Colonic mucosa (tissue), 4 donors: ENCODE measurements at regions of chr12 and their contacts with region 1.

Region 1: DNA sequence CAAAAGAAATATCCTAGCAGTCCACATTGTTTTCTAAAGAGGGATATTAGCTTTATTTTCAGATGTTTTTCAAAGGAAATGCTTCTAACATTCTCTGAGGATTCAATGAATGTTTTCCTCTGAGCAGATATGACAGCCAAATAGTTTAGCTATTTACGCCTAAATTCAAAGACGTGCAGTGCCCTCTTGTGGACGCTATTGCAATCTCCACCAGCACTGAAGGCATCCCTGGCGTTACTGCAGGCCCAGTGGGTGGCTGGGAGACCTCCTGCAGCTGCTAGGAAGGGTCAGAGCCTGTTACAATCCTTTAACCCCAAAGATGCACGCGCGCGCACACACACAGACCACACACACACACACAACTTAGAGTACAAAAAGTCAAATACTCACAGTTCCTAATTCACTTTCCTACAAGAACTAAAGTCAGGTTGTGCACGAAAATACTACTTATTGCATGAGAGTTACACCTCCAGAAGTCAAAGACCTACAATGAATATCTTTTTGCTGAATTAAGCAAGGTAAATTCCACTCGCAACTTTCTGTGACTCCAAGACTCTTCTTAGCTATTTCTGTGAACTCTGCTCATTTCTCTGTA is 589.3 kb upstream of the TMEM132C start:
- DNase-seq: peak; percentile 53
- H3K4me3 ChIP-seq: no peak overlapping the region
- H3K27ac ChIP-seq: no peak overlapping the region
- H3K4me1 ChIP-seq: no peaks in the 10 kb centered on the region
- H3K27me3 ChIP-seq: no peaks in the 10 kb centered on the region
- CTCF ChIP-seq: peak; percentile 65

Region 2: DNA sequence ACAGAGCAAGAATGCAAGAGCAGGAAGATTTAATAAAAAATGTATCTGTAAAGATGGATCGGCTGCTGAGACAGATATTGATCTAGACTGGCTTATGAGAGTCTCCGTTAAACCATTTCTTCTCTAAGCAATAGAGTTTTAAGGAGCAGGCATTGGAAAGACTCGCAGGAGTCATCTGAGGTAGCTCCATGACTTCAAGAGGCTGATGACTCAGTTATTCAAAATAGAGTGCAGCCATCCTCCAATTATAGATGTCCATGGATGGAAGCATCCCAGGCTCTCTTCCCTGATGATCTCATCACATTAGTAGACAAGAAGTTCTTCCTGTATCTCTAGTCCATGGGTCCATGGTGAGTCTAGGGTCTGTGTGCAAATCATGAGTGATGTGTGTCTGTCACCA is 49.0 kb before region 1 on chr12:
- intact Hi-C with region 1: no loop called
- DNase-seq: no peak
- H3K4me3 ChIP-seq: no peak overlapping the region
- H3K27ac ChIP-seq: no peak overlapping the region
- H3K4me1 ChIP-seq: no peaks in the 10 kb centered on the region
- H3K27me3 ChIP-seq: no peaks in the 10 kb centered on the region
- CTCF ChIP-seq: no peak

Region 3: DNA sequence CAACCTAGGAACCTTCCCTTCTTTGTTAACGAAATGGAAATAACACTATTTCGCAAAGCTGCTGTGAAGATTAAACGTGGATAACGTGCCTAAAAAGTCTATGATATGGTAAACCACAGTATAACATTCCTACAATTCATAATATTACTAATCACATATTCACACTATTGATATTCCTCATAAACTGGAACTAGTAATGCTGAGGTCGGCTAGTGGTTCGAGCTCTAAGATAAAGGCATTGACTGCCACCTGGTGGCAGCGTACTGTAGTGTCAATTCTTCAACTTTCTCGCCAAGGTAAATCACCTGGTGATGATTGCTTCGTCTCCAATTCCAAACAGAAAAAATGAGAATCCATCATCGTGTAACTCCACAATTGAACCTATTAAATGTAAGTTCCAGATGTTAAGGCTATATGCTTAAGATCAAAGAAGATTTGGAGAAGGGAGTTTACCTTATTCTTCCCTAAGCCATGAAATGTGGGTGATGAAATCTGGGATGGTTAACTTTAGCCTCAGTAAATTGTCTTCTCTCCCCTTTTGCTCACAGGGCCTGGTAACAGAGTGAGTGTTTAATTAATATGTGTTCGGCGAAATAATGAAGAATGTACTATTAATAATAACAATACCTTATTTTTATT is 391.8 kb after region 1 on chr12:
- intact Hi-C with region 1: loop called (anchors 10 kb)
- DNase-seq: peak; percentile 50
- H3K4me3 ChIP-seq: no peak overlapping the region
- H3K27ac ChIP-seq: no peak overlapping the region
- H3K4me1 ChIP-seq: no peaks in the 10 kb centered on the region
- H3K27me3 ChIP-seq: no peaks in the 10 kb centered on the region
- CTCF ChIP-seq: peak; percentile 60